ENCODE measurements at regions of chr18 and their contacts with region 1.

Region 1: GRCh38 chr18:35343936-35344735 is at the start of gene ZNF24:
- DNase-seq: peak; percentile 92
- ATAC-seq: peak; percentile 83
- H3K4me3 Mint-ChIP-seq: peak within 1 kb of the TSS; percentile 98
- H3K27ac Mint-ChIP-seq: peak within 1 kb of the TSS; percentile 96
- H3K4me1 Mint-ChIP-seq: peaks cover 59% of the 10 kb centered on the region
- H3K27me3 Mint-ChIP-seq: no peaks in the 10 kb centered on the region
- CTCF ChIP-seq: no peak
- total RNA-seq, gene ZNF24: 72.5 and 75.8 TPM in 2 replicates

Region 2: DNA sequence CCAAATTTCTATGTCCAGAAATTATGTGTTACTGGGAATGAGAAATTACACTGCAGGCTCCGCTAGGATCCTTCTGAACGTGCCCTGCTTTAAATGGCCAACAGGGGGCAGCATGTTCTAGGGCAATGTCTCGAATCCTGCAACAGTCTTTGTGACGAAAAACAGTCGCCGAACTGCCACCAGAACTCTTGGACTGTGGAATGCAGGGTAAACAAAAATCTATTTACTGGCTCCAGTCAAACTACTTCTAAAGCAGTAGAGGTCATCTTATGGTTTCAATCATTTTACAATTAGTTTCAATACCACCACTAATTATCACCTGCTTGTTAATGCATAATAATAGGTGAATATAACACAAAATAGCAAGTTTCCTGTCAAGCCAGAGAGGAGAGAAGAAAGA is 113.1 kb before region 1 on chr18:
- CTCF ChIA-PET with region 1: interaction called, 4 read pairs
- POLR2A ChIA-PET with region 1: no interaction called
- intact Hi-C with region 1: loop called (anchors 2 kb)
- DNase-seq: peak; percentile 49
- ATAC-seq: peak; percentile 97
- H3K4me3 Mint-ChIP-seq: peak overlapping the region; percentile 36
- H3K27ac Mint-ChIP-seq: no peak overlapping the region
- H3K4me1 Mint-ChIP-seq: peaks cover 3% of the 10 kb centered on the region
- H3K27me3 Mint-ChIP-seq: no peaks in the 10 kb centered on the region
- CTCF ChIP-seq: peak; percentile 75

Region 3: GRCh38 chr18:35247444-35248249 is 96.5 kb before region 1 on chr18:
- CTCF ChIA-PET with region 1: no interaction called
- POLR2A ChIA-PET with region 1: interaction called, 10 read pairs
- intact Hi-C with region 1: no loop called
- DNase-seq: no peak
- ATAC-seq: peak; percentile 94
- H3K4me3 Mint-ChIP-seq: peak overlapping the region; percentile 60
- H3K27ac Mint-ChIP-seq: peak overlapping the region; percentile 90
- H3K4me1 Mint-ChIP-seq: peaks cover 43% of the 10 kb centered on the region
- H3K27me3 Mint-ChIP-seq: no peaks in the 10 kb centered on the region
- CTCF ChIP-seq: no peak

Region 4: GRCh38 chr18:35290073-35290735 is 53.9 kb before region 1 on chr18 and contains the start of gene ZSCAN30:
- CTCF ChIA-PET with region 1: no interaction called
- POLR2A ChIA-PET with region 1: interaction called, 32 read pairs
- intact Hi-C with region 1: loop called (anchors 1 kb)
- DNase-seq: peak; percentile 92
- ATAC-seq: peak; percentile 97
- H3K4me3 Mint-ChIP-seq: peak within 1 kb of the TSS; percentile 100
- H3K27ac Mint-ChIP-seq: peak within 1 kb of the TSS; percentile 99
- H3K4me1 Mint-ChIP-seq: peaks cover 51% of the 10 kb centered on the region
- H3K27me3 Mint-ChIP-seq: peaks cover 2% of the 10 kb centered on the region
- CTCF ChIP-seq: no peak
- total RNA-seq, gene ZSCAN30: 21.2 and 23.8 TPM in 2 replicates

Region 5: GRCh38 chr18:35376742-35377695 is 32.9 kb after region 1 on chr18 and contains the start of gene ZNF396:
- CTCF ChIA-PET with region 1: no interaction called
- POLR2A ChIA-PET with region 1: interaction called, 8 read pairs
- intact Hi-C with region 1: loop called (anchors 1 kb)
- DNase-seq: peak; percentile 68
- ATAC-seq: peak; percentile 72
- H3K4me3 Mint-ChIP-seq: peak within 1 kb of the TSS; percentile 89
- H3K27ac Mint-ChIP-seq: peak within 1 kb of the TSS; percentile 47
- H3K4me1 Mint-ChIP-seq: peaks cover 11% of the 10 kb centered on the region
- H3K27me3 Mint-ChIP-seq: no peaks in the 10 kb centered on the region
- CTCF ChIP-seq: no peak
- total RNA-seq, gene ZNF396: 1.5 and 2.2 TPM in 2 replicates

Region 6: GRCh38 chr18:36828630-36829361 is 1484.7 kb after region 1 on chr18 and contains the starts of genes KIAA1328 and TPGS2:
- CTCF ChIA-PET with region 1: no interaction called
- POLR2A ChIA-PET with region 1: no interaction called
- intact Hi-C with region 1: loop called (anchors 2 kb)
- DNase-seq: peak; percentile 88
- ATAC-seq: peak; percentile 91
- H3K4me3 Mint-ChIP-seq: peak within 1 kb of the TSS; percentile 94
- H3K27ac Mint-ChIP-seq: peak within 1 kb of the TSS; percentile 84
- H3K4me1 Mint-ChIP-seq: peaks cover 31% of the 10 kb centered on the region
- H3K27me3 Mint-ChIP-seq: no peaks in the 10 kb centered on the region
- CTCF ChIP-seq: no peak
- total RNA-seq, gene KIAA1328: 11.7 and 12.9 TPM in 2 replicates
- total RNA-seq, gene TPGS2: 42.1 and 45.1 TPM in 2 replicates